Activated CD4-positive, alpha-beta T cell treated with anti-CD3 and anti-CD28 coated beads, Interleukin-2, amount 10 ng/mL, durations not matched to agents 24 days and 14 days (primary cell): ENCODE measurements at regions of chr4 and their contacts with region 1.

Region 1: GRCh38 chr4:101527188-101527587 is 179.9 kb upstream of the PPP3CA start:
- DNase-seq: peak; percentile 87
- H3K4me3 Mint-ChIP-seq: peak overlapping the region; percentile 45
- H3K27ac Mint-ChIP-seq: peak overlapping the region; percentile 64
- H3K4me1 Mint-ChIP-seq: peaks cover 15% of the 10 kb centered on the region
- H3K27me3 Mint-ChIP-seq: peaks cover 46% of the 10 kb centered on the region

Region 2: DNA sequence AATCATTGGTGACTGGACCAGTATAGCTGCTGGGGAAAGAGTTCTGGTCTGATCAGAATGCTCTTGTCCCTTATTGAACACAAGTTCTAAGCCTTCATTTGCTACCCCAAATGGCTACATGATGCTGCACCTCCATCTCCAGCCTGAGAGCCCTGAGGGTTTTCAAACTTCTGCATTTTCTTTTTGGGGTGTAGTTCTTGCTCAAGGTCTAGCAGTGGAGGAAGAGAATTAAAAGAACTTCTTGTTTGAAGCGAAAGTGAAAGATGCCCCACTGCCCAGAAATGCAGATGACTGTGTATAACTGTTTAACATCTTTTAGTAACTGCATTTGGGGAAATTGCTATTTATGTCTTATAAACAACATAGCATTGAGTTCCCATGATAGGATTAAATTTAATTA is 1671.5 kb before region 1 on chr4:
- intact Hi-C with region 1: loop called (anchors 10 kb)
- DNase-seq: peak; percentile 82
- H3K4me3 Mint-ChIP-seq: peak overlapping the region; percentile 68
- H3K27ac Mint-ChIP-seq: peak overlapping the region; percentile 88
- H3K4me1 Mint-ChIP-seq: peaks cover 67% of the 10 kb centered on the region
- H3K27me3 Mint-ChIP-seq: no peaks in the 10 kb centered on the region

Region 3: DNA sequence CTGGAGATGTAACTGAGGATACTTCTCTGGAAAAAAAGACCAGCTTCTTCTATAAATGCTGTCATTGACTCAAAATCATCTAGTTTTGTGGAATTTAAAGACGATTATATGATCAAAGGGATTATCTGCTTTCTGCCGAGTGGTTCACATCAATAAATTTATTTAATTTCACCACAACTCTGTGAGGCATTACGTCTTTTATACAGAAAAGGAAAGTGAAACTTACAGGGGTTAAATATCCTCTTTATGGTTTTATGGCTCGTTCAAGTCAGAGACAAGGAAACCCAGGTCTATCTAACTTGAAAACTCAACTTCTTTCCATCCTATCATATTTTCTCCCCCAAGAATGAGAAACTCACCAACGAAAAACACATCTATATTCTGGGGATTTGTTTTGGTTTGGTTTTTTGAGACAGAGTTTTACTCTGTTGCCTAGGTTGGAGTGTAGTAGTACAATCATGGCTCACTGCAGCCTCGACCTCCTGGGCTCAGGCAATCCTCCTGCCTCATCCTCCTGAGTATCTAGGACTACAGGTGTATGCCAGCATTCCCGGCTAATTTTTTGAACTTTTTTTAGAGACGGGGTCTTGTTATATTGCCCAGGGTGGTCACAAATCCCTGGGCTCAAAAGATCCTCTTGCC is 631.5 kb before region 1 on chr4:
- intact Hi-C with region 1: loop called (anchors 10 kb)
- DNase-seq: no peak
- H3K4me3 Mint-ChIP-seq: peak overlapping the region; percentile 83
- H3K27ac Mint-ChIP-seq: peak overlapping the region; percentile 59
- H3K4me1 Mint-ChIP-seq: peaks cover 14% of the 10 kb centered on the region
- H3K27me3 Mint-ChIP-seq: peaks cover 2% of the 10 kb centered on the region

Region 4: GRCh38 chr4:101205916-101206315 is 321.3 kb before region 1 on chr4:
- intact Hi-C with region 1: loop called (anchors 2 kb)
- DNase-seq: peak; percentile 86
- H3K4me3 Mint-ChIP-seq: peak overlapping the region; percentile 13
- H3K27ac Mint-ChIP-seq: peak overlapping the region; percentile 50
- H3K4me1 Mint-ChIP-seq: peaks cover 23% of the 10 kb centered on the region
- H3K27me3 Mint-ChIP-seq: peaks cover 3% of the 10 kb centered on the region

Region 5: DNA sequence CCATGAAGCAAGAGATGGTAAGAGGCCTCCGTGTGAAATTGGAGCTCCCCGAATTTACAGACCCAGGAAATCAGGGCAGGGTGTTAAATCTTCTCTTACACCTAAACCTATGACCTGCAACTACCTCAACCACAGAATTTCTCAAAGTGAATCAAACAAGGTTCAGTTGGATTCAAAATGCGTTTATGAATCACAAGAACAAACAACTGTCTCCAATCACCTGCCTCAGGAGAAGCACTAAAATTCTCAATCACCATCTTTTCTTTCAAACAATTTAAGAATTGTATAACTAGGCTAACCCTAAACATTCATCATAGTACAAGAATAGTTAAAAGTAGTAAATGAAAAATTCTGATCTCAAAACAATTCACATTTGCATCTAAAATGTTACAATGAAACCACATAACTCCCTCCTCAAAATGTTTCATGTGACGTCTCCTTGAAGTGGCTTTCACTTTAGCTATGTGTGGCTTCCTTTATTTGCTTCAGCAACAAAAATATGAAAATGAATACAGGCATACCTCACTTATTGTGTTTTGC is 199.1 kb before region 1 on chr4:
- intact Hi-C with region 1: loop called (anchors 1 kb)
- DNase-seq: peak; percentile 76
- H3K4me3 Mint-ChIP-seq: peak overlapping the region; percentile 68
- H3K27ac Mint-ChIP-seq: peak overlapping the region; percentile 54
- H3K4me1 Mint-ChIP-seq: peaks cover 18% of the 10 kb centered on the region
- H3K27me3 Mint-ChIP-seq: peaks cover 37% of the 10 kb centered on the region

Region 6: DNA sequence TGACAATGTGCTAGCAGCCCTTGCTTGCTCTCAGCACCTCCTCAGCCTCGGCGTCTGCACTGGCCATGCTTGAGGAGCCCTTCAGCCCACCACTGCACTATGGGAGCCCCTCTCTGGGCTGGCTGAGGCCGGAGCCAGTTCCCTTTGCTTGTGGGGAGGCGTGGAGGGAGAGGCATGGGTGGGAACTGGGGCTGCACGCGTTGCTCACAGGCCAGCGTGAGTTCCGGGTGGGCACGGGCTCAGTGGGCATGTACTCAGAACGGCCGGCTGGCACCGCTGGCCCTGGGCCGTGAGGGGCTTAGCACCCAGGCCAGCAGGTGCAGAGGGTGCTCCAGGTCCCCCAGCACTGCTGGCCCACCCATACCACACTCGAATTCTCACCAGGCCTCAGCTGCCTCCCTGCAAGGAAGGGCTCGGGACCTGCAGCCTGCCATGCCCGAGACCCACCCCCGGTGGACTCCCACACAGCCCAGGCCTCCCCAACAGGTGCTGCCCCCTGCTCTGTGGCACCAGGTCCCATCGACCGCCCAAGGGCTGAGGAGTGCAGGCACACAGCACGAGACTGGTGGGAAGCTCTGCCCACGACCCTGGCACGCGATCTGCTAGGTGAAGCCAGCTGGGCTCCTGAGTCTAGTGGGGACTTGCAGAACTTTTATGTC is 717.8 kb after region 1 on chr4:
- intact Hi-C with region 1: no loop called
- DNase-seq: no peak
- H3K4me3 Mint-ChIP-seq: no peak overlapping the region
- H3K27ac Mint-ChIP-seq: no peak overlapping the region
- H3K4me1 Mint-ChIP-seq: no peaks in the 10 kb centered on the region
- H3K27me3 Mint-ChIP-seq: no peaks in the 10 kb centered on the region